ENCODE measurements at regions of chr4 and their contacts with region 1.

Region 1: GRCh38 chr4:39458505-39459300 is at the starts of genes LIAS and RPL9:
- DNase-seq: peak; percentile 99 to 100 (median 99)
- H3K4me3 ChIP-seq: peak within 1 kb of the TSS; percentile 74 to 99 (median 91)
- H3K27ac ChIP-seq: peak within 1 kb of the TSS; percentile 96 to 98
- H3K4me1 ChIP-seq: peaks cover 13 to 25% (median 17%) of the 10 kb centered on the region in 4 experiments
- H3K27me3 ChIP-seq: no peaks in the 10 kb centered on the region

Region 2: GRCh38 chr4:38785901-38786402 is 672.8 kb before region 1 on chr4:
- CTCF ChIA-PET with region 1: no interaction called
- POLR2A ChIA-PET with region 1: no interaction called
- DNase-seq: peak in 2 of 3 donors; percentile 21 to 35
- H3K4me3 ChIP-seq: no peak overlapping the region
- H3K27ac ChIP-seq: no peak overlapping the region
- H3K4me1 ChIP-seq: peaks cover 0 to 25% (median 9%) of the 10 kb centered on the region in 4 experiments
- H3K27me3 ChIP-seq: no peaks in the 10 kb centered on the region

Region 3: GRCh38 chr4:39446751-39447573 is 11.7 kb before region 1 on chr4:
- CTCF ChIA-PET with region 1: interaction called, 10 read pairs
- POLR2A ChIA-PET with region 1: interaction called, 3 read pairs
- DNase-seq: peak; percentile 69 to 93 (median 90)
- H3K4me3 ChIP-seq: peak overlapping the region in 5 of 7 experiments; percentile 25 to 78 (median 67)
- H3K27ac ChIP-seq: no peak overlapping the region
- H3K4me1 ChIP-seq: peaks cover 0 to 13% (median 6%) of the 10 kb centered on the region in 4 experiments
- H3K27me3 ChIP-seq: peaks cover 0 to 2% (median 0%) of the 10 kb centered on the region in 5 experiments

Region 4: GRCh38 chr4:39469429-39470077 is 10.8 kb after region 1 on chr4:
- CTCF ChIA-PET with region 1: interaction called, 23 read pairs
- POLR2A ChIA-PET with region 1: no interaction called
- DNase-seq: peak; percentile 89 to 92 (median 92)
- H3K4me3 ChIP-seq: peak overlapping the region in 4 of 7 experiments; percentile 5 to 57 (median 45)
- H3K27ac ChIP-seq: peak overlapping the region; percentile 26 to 46
- H3K4me1 ChIP-seq: peaks cover 0 to 6% (median 5%) of the 10 kb centered on the region in 4 experiments
- H3K27me3 ChIP-seq: no peaks in the 10 kb centered on the region

Measured in common myeloid progenitor, CD34-positive (primary cell).